Activated naive CD4-positive, alpha-beta T cell treated with anti-CD3 and anti-CD28 coated beads, Interleukin-2, amount 10 ng/mL, durations not matched to agents 7 days and 5 days (primary cell): ENCODE measurements at regions of chr1 and their contacts with region 1.

Region 1: DNA sequence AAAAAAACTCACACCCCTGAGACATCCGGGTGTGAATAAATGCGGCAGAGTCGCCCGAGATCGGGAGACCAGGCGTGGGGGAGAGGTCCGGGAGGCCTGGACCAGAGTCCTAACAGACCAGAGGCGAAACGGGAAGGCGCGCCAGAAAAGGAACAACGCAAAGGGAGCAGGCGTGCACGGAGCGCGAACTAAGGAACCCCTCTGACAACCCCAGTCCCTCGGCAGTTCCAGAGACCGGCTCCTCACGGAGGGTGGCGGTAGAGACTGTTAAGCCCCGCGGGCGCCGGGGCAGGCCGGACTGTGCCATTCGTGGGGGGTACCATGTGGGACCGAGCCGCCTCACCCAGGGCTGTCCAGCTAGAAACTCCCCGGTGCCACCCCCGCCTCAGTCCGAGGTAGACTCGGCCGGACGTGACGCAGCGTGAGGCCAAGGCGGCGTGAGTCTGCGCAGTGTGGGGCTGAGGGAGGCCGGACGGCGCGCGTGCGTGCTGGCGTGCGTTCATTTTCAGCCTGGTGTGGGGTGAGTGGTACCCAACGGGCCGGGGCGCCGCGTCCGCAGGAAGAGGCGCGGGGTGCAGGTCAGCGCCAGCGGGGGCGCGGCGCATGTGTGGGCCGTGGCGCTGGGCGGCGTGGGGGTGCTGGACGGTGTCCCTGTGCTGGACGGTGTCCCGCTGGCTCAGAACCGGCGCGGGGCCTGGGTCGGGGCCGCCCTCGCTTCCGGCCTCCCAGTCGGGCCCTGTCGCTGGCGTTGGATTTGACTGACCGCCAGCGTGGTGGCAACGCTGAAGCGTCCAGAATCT is at the start of gene PARK7:
- DNase-seq: peak; percentile 100
- H3K4me3 Mint-ChIP-seq: peak within 1 kb of the TSS; percentile 97
- H3K27ac Mint-ChIP-seq: peak within 1 kb of the TSS; percentile 99
- H3K4me1 Mint-ChIP-seq: peaks cover 67% of the 10 kb centered on the region
- H3K27me3 Mint-ChIP-seq: no peaks in the 10 kb centered on the region

Region 2: GRCh38 chr1:7975212-7975865 is 13.9 kb after region 1 on chr1:
- CTCF ChIA-PET with region 1: interaction called, 11 read pairs
- DNase-seq: peak; percentile 46
- H3K4me3 Mint-ChIP-seq: no peak overlapping the region
- H3K27ac Mint-ChIP-seq: no peak overlapping the region
- H3K4me1 Mint-ChIP-seq: no peaks in the 10 kb centered on the region
- H3K27me3 Mint-ChIP-seq: no peaks in the 10 kb centered on the region

Region 3: DNA sequence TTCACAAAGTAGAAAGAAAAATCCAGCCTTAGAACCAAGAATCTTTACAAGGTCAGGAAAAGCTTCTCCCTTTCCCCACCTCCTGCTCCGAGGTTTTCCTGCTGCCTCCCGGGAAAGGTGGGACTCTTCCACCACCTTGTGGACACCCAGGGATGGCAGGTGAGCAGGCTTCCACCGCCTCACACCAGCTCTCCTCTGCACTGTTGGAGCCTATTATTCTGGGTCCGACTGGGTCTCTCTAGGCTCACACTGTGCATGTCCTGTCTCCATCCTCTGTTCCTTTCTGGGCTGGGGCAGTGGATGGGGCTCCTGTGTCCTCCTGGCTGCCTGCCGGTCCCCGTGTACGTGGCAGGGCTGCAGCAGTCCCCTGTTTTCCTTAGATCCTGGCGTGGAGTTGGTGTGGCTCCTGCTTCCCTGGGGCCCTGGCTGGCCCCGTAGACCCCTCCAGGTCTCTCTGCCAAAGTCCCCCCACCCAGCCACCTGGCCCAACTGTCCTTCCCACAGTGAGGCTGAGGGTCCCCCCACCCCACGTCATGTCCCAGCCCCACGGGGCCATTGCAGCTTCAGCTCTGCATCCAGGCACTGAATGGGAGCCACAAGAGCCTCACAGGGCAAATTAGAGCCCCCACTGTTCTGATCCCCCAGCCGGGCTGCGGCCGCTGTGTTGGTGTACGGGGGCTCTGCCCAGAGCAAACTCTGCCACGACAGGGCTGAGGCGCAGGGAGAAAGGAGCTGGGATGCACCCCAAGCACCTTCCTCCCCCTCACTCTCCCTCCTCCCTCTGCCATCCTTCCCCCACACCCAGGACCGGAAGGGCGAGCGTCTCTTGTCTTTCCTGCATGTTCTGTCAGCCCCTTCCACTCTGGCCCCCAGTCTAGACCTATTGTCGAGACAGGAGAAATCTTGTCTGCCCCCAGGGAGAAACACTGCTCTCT is 353.2 kb after region 1 on chr1:
- CTCF ChIA-PET with region 1: no interaction called
- DNase-seq: peak; percentile 66
- H3K4me3 Mint-ChIP-seq: no peak overlapping the region
- H3K27ac Mint-ChIP-seq: no peak overlapping the region
- H3K4me1 Mint-ChIP-seq: peaks cover 24% of the 10 kb centered on the region
- H3K27me3 Mint-ChIP-seq: peaks cover 59% of the 10 kb centered on the region